Right cardiac atrium (tissue), 5 donors: ENCODE measurements at regions of chr19 and their contacts with region 1.

Region 1: GRCh38 chr19:9507285-9507684 is 8.9 kb upstream of the ZNF560 start:
- DNase-seq: no peak
- ATAC-seq: no peak
- H3K4me3 ChIP-seq: no peak overlapping the region
- H3K27ac ChIP-seq: no peak overlapping the region
- H3K4me1 ChIP-seq: no peaks in the 10 kb centered on the region
- H3K27me3 ChIP-seq: no peaks in the 10 kb centered on the region

Region 2: DNA sequence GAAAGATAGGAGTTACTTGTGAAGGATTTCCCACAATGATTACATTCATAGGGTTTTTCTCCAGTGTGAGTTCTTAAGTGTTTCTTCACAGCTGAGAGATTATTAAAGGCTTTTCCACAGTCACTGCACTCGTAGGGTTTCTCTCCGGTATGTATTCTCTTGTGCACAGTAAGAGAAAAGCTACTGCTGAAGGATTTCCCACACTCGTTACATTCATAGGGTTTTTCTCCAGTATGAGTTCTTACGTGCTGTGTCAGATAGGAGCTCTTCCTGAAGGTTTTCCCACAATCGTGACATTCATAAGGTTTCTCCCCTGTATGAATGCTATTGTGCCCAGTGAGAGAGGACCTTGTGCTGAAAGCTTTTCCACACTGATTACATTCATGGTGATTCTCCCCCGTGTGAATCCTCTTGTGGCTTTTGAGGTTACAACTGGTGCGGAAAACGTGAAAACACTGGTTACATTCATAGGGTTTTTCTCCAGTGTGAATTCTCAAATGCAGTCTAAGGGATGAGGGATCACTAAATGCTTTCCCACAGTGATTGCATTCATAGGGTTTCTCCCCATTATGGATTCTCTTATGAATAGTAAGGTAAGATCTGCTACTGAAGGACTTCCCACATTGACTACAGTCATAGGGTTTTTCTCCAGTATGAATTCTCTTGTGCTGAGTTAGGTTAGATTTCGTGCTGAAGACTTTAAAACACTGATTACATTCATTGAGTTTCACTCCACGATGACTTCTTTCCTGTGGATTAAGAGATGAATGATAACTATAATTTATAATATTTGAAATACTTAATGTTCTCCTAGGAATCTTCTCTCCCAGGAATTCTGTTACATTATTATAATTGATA is 695.7 kb before region 1 on chr19:
- intact Hi-C with region 1: loop called in 1 of 4 experiments (anchors 10 kb)
- DNase-seq: no peak
- ATAC-seq: no peak
- H3K4me3 ChIP-seq: no peak overlapping the region
- H3K27ac ChIP-seq: no peak overlapping the region
- H3K4me1 ChIP-seq: no peaks in the 10 kb centered on the region
- H3K27me3 ChIP-seq: no peaks in the 10 kb centered on the region

Region 3: GRCh38 chr19:9751446-9751845 is 244.2 kb after region 1 on chr19:
- intact Hi-C with region 1: no loop called
- DNase-seq: no peak
- ATAC-seq: no peak
- H3K4me3 ChIP-seq: no peak overlapping the region
- H3K27ac ChIP-seq: no peak overlapping the region
- H3K4me1 ChIP-seq: no peaks in the 10 kb centered on the region
- H3K27me3 ChIP-seq: no peaks in the 10 kb centered on the region